AG04450 (cell line): ENCODE measurements at regions of chr3 and their contacts with region 1.

Region 1: DNA sequence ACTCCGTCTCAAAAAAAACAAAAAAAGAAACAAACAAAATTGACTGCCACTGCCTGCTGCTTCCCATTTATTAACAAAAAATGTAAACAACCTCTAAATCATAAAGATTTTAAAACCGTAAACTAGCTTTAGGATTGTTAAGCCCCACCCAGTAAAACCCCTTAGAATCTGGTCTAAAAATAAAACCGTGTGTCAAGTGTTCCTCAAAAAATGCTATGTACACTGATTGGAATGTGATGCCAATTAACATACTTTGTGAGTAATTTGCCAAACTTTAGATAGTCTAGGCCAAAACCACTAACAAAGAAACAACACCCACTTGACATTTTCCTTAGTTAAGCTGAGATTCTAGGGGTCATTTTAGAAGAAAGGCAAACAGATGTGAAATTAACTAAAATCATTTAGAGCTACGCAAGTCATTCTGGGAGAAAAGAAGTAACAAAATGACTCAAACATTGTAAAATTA is 5.3 kb downstream of the RAF1 start:
- DNase-seq: no peak
- H3K4me3 ChIP-seq: no peak overlapping the region
- H3K27ac ChIP-seq: peak overlapping the region; percentile 66
- H3K27me3 ChIP-seq: no peaks in the 10 kb centered on the region
- CTCF ChIP-seq: no peak

Region 2: GRCh38 chr3:12681943-12682390 is 23.3 kb after region 1 on chr3:
- CTCF ChIA-PET with region 1: no interaction called
- POLR2A ChIA-PET with region 1: interaction called, 10 read pairs
- DNase-seq: no peak
- H3K4me3 ChIP-seq: no peak overlapping the region
- H3K27ac ChIP-seq: no peak overlapping the region
- H3K27me3 ChIP-seq: no peaks in the 10 kb centered on the region
- CTCF ChIP-seq: no peak

Region 3: GRCh38 chr3:12868039-12869034 is 209.7 kb after region 1 on chr3:
- CTCF ChIA-PET with region 1: no interaction called
- POLR2A ChIA-PET with region 1: no interaction called
- DNase-seq: peak; percentile 61
- H3K4me3 ChIP-seq: 0 out of 2 replicates have a peak overlapping the region, but pooled peaks have one; percentile 13
- H3K27ac ChIP-seq: no peak overlapping the region
- H3K27me3 ChIP-seq: peaks cover 42% of the 10 kb centered on the region
- CTCF ChIP-seq: peak; percentile 95